Pancreas (tissue), 10 donors: ENCODE measurements at regions of chr2 and their contacts with region 1.

Region 1: GRCh38 chr2:68925295-68925896 is 27.3 kb downstream of the GKN2 start:
- DNase-seq: peak in 2 of 6 donors; percentile 21 to 58
- ATAC-seq: peak; percentile 76 to 93 (median 88)
- H3K4me3 ChIP-seq: no peak overlapping the region
- H3K27ac ChIP-seq: no peak overlapping the region
- H3K4me1 ChIP-seq: peaks cover 0 to 7% (median 3%) of the 10 kb centered on the region in 3 donors
- H3K27me3 ChIP-seq: no peaks in the 10 kb centered on the region
- CTCF ChIP-seq: peak; percentile 54 to 87 (median 82)

Region 2: DNA sequence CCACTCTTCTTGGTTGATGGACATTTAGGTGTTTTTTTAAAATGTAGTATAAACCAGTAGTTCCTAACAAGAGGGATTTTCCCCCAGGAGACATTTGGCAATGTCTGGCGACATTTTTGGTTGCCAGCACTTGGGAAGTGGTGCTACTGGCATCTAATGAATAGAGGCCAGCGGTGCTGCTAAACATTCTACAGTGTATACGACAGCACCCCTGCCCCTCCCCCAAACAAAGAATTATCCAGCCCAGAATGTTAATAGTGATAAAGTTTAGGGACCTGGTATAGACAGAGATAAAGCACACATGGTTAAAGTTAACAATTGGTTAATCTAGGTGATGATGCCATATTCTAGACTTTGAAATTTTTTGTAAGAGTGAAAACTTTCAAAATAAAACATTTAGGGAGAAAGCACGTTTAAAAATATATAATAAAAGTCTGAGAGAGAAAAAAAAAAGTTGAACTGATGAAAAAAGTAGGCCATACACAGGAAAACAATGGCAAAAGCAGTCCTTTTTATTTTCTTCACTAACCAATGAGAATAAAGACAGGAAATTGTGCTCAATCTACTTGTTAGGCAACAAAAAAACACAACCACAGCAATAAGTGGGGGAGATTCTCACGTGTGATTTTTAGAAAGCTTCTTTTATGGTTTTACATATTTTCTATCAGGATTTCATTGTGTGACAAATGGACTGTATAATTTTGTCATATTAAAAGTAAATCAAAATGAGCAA is 473.1 kb before region 1 on chr2:
- intact Hi-C with region 1: loop called in 1 of 3 experiments (anchors 10 kb)
- DNase-seq: peak in 2 of 6 donors; percentile 33 to 41
- ATAC-seq: peak in 1 of 4 donors; percentile 34
- H3K4me3 ChIP-seq: no peak overlapping the region
- H3K27ac ChIP-seq: no peak overlapping the region
- H3K4me1 ChIP-seq: no peaks in the 10 kb centered on the region
- H3K27me3 ChIP-seq: no peaks in the 10 kb centered on the region
- CTCF ChIP-seq: no peak

Region 3: DNA sequence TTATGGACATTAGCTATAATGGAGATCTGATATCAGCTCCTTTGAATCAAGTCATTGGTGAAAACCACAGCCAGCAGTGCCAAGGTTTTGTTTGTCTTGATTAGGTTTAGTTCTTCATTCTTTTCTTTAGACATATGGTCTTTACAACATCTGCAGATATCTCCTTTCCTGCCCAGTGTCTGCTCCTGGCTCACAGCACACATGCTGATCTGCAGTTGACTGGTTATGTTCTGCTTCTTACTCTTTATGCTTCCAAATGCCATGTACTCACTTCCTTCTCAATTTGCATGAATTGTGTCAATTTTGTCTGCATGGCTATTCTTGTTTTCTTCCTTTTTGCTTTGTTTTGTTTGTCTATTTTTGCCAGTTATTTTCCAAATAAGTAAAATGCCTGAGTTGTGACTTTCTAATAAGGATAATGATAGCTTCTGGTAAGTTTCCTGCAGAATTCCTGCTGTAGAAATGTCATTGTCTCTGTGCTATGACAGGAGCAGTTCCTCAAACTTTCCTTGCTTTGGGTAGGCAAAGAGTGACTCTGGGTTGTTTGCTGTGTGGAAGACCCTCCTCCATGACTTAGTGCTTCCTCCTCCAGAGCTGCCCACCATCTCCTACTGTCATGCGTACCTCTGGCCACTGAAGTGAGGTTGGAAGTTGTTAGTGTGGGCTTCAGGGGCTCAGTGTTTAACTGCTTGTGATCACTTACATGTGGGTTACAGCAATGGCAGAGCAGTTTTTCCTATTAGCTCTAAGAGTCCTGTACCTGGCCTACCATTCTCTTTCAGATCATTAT is 182.6 kb before region 1 on chr2:
- intact Hi-C with region 1: loop called in 2 of 3 experiments (anchors 5 to 10 kb)
- DNase-seq: no peak
- ATAC-seq: peak in 1 of 4 donors; percentile 62
- H3K4me3 ChIP-seq: no peak overlapping the region
- H3K27ac ChIP-seq: no peak overlapping the region
- H3K4me1 ChIP-seq: no peaks in the 10 kb centered on the region
- H3K27me3 ChIP-seq: no peaks in the 10 kb centered on the region
- CTCF ChIP-seq: no peak

Region 4: GRCh38 chr2:68971591-68972231 is 46.3 kb after region 1 on chr2:
- intact Hi-C with region 1: no loop called
- DNase-seq: no peak
- ATAC-seq: peak; percentile 43 to 78 (median 58)
- H3K4me3 ChIP-seq: no peak overlapping the region
- H3K27ac ChIP-seq: no peak overlapping the region
- H3K4me1 ChIP-seq: no peaks in the 10 kb centered on the region
- H3K27me3 ChIP-seq: no peaks in the 10 kb centered on the region
- CTCF ChIP-seq: no peak